ENCODE measurements at regions of chr1 and their contacts with region 1.

Region 1: GRCh38 chr1:24930204-24931145 is at the start of gene RUNX3:
- DNase-seq: peak; percentile 87 to 98 (median 94)
- ATAC-seq: peak; percentile 77
- H3K4me3 ChIP-seq: peak within 1 kb of the TSS; percentile 89 to 97
- H3K4me3 Mint-ChIP-seq: peak within 1 kb of the TSS; percentile 93
- H3K27ac ChIP-seq: peak within 1 kb of the TSS; percentile 95 to 96
- H3K27ac Mint-ChIP-seq: peak within 1 kb of the TSS; percentile 99
- H3K4me1 ChIP-seq: peaks cover 49% of the 10 kb centered on the region
- H3K4me1 Mint-ChIP-seq: peaks cover 50% of the 10 kb centered on the region
- H3K27me3 ChIP-seq: no peaks in the 10 kb centered on the region
- H3K27me3 Mint-ChIP-seq: no peaks in the 10 kb centered on the region
- CTCF ChIP-seq: no peak
- total RNA-seq, gene RUNX3: 423 to 424 TPM

Region 2: GRCh38 chr1:24502709-24503058 is 427.8 kb before region 1 on chr1 and contains the start of gene RCAN3:
- CTCF ChIA-PET with region 1: no interaction called
- POLR2A ChIA-PET with region 1: interaction called, 4 read pairs
- intact Hi-C with region 1: loop called (anchors 10 kb)
- DNase-seq: peak; percentile 78 to 95 (median 88)
- ATAC-seq: peak; percentile 63
- H3K4me3 ChIP-seq: peak within 1 kb of the TSS; percentile 73 to 76
- H3K4me3 Mint-ChIP-seq: peak within 1 kb of the TSS; percentile 99
- H3K27ac ChIP-seq: peak within 1 kb of the TSS; percentile 82 to 95
- H3K27ac Mint-ChIP-seq: peak within 1 kb of the TSS; percentile 99
- H3K4me1 ChIP-seq: peaks cover 47% of the 10 kb centered on the region
- H3K4me1 Mint-ChIP-seq: peaks cover 70% of the 10 kb centered on the region
- H3K27me3 ChIP-seq: no peaks in the 10 kb centered on the region
- H3K27me3 Mint-ChIP-seq: no peaks in the 10 kb centered on the region
- CTCF ChIP-seq: no peak
- total RNA-seq, gene RCAN3: 129 to 130 TPM

Region 3: GRCh38 chr1:24886241-24886640 is 44.2 kb before region 1 on chr1:
- CTCF ChIA-PET with region 1: no interaction called
- POLR2A ChIA-PET with region 1: no interaction called
- intact Hi-C with region 1: no loop called
- DNase-seq: peak in 1 of 9 experiments; percentile 17
- ATAC-seq: no peak
- H3K4me3 ChIP-seq: no peak overlapping the region
- H3K4me3 Mint-ChIP-seq: no peak overlapping the region
- H3K27ac ChIP-seq: no peak overlapping the region
- H3K27ac Mint-ChIP-seq: no peak overlapping the region
- H3K4me1 ChIP-seq: no peaks in the 10 kb centered on the region
- H3K4me1 Mint-ChIP-seq: no peaks in the 10 kb centered on the region
- H3K27me3 ChIP-seq: no peaks in the 10 kb centered on the region
- H3K27me3 Mint-ChIP-seq: no peaks in the 10 kb centered on the region
- CTCF ChIP-seq: no peak

Region 4: GRCh38 chr1:24909388-24909898 is 21.0 kb before region 1 on chr1:
- CTCF ChIA-PET with region 1: interaction called, 100 read pairs
- POLR2A ChIA-PET with region 1: interaction called, 195 read pairs
- intact Hi-C with region 1: loop called (anchors 1 kb)
- DNase-seq: peak in 3 of 9 experiments; percentile 13 to 41 (median 28)
- ATAC-seq: no peak
- H3K4me3 ChIP-seq: no peak overlapping the region
- H3K4me3 Mint-ChIP-seq: peak overlapping the region; percentile 5
- H3K27ac ChIP-seq: peak overlapping the region; percentile 24 to 96
- H3K27ac Mint-ChIP-seq: peak overlapping the region; percentile 100
- H3K4me1 ChIP-seq: peaks cover 87% of the 10 kb centered on the region
- H3K4me1 Mint-ChIP-seq: peaks cover 68% of the 10 kb centered on the region
- H3K27me3 ChIP-seq: no peaks in the 10 kb centered on the region
- H3K27me3 Mint-ChIP-seq: no peaks in the 10 kb centered on the region
- CTCF ChIP-seq: no peak

Region 5: DNA sequence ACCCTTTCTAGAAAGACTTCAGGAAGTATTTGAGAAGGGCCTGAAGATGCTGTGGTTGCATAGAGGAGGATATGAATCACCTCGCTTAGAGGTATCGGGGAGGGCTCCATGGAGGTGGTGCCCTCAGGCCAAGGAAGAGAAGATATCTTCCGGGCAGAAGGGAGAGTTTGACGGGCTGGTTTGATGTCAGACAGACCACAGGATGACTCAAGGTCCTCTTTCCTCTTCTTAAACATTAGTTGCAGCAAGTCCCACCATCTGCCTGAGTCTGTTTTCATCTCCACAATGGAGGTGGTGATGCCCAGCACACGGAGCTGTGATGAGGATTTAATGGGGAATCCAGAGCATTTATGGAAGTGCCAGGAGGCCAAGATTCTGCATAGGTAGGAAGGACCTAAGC is 24.7 kb after region 1 on chr1:
- CTCF ChIA-PET with region 1: interaction called, 111 read pairs
- POLR2A ChIA-PET with region 1: interaction called, 9 read pairs
- intact Hi-C with region 1: no loop called
- DNase-seq: peak in 8 of 9 experiments; percentile 56 to 88 (median 72)
- ATAC-seq: peak; percentile 82
- H3K4me3 ChIP-seq: peak overlapping the region in 1 of 2 experiments; percentile 2
- H3K4me3 Mint-ChIP-seq: peak overlapping the region; percentile 37
- H3K27ac ChIP-seq: peak overlapping the region in 1 of 2 experiments; percentile 23
- H3K27ac Mint-ChIP-seq: peak overlapping the region; percentile 93
- H3K4me1 ChIP-seq: peaks cover 76% of the 10 kb centered on the region
- H3K4me1 Mint-ChIP-seq: peaks cover 83% of the 10 kb centered on the region
- H3K27me3 ChIP-seq: no peaks in the 10 kb centered on the region
- H3K27me3 Mint-ChIP-seq: no peaks in the 10 kb centered on the region
- CTCF ChIP-seq: no peak

Region 6: GRCh38 chr1:24987875-24988557 is 57.5 kb after region 1 on chr1:
- CTCF ChIA-PET with region 1: interaction called, 6 read pairs
- POLR2A ChIA-PET with region 1: no interaction called
- intact Hi-C with region 1: loop called in 1 of 2 experiments (anchors 2 kb)
- DNase-seq: peak in 2 of 9 experiments; percentile 33 to 71
- ATAC-seq: peak; percentile 45
- H3K4me3 ChIP-seq: no peak overlapping the region
- H3K4me3 Mint-ChIP-seq: peak overlapping the region; percentile 53
- H3K27ac ChIP-seq: no peak overlapping the region
- H3K27ac Mint-ChIP-seq: peak overlapping the region; percentile 83
- H3K4me1 ChIP-seq: peaks cover 100% of the 10 kb centered on the region
- H3K4me1 Mint-ChIP-seq: peaks cover 97% of the 10 kb centered on the region
- H3K27me3 ChIP-seq: no peaks in the 10 kb centered on the region
- H3K27me3 Mint-ChIP-seq: no peaks in the 10 kb centered on the region
- CTCF ChIP-seq: no peak

Region 7: DNA sequence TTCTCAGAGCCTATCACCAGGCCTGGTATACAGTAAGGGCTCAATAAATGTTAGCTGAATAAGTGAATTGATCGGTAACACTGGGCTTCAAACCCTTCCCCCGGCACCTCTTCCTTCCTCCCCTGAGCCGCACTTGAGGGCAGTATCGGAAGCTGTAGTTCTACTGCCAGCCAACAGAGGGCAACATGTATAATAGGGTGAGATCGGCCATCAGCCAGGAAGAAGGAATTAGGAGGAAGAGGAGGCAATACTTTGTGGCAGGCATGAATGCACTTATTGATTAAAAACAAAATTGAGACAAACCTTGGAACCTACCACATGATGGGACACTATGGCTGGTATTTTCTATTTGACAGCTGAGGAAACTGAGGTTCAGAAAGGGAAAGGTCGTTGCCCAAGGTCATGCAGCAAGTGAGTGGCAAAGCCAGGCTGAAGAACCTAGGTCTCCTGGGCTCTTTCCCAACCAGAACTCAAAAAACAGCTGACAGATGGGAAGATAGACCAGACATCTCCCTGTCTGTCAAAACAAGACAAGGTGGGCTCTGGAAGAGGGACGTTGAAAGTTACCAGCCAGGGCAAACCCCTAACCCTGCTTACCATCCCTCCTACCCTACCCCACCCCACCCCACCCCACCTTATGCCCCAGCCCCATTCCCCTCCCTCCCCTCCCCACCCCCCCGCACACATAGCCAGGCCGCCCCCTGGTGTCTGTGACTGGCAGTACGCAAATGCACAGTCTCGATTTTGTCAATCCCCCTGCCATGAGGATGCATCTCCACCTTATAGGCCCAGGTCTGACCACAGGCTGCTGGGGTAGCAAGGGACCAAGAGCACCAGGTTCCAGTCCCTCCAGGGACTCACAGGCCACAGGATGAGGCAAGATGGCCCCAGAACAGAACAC is 106.9 kb after region 1 on chr1:
- CTCF ChIA-PET with region 1: interaction called, 67 read pairs
- POLR2A ChIA-PET with region 1: interaction called, 16 read pairs
- intact Hi-C with region 1: loop called (anchors 1 kb)
- DNase-seq: peak in 8 of 9 experiments; percentile 59 to 80 (median 70)
- ATAC-seq: peak; percentile 47
- H3K4me3 ChIP-seq: no peak overlapping the region
- H3K4me3 Mint-ChIP-seq: peak overlapping the region; percentile 5
- H3K27ac ChIP-seq: no peak overlapping the region
- H3K27ac Mint-ChIP-seq: no peak overlapping the region
- H3K4me1 ChIP-seq: peaks cover 65% of the 10 kb centered on the region
- H3K4me1 Mint-ChIP-seq: peaks cover 52% of the 10 kb centered on the region
- H3K27me3 ChIP-seq: no peaks in the 10 kb centered on the region
- H3K27me3 Mint-ChIP-seq: no peaks in the 10 kb centered on the region
- CTCF ChIP-seq: peak; percentile 72

Region 8: GRCh38 chr1:25148673-25149300 is 218.3 kb after region 1 on chr1:
- CTCF ChIA-PET with region 1: interaction called, 5 read pairs
- POLR2A ChIA-PET with region 1: no interaction called
- intact Hi-C with region 1: loop called (anchors 1 kb)
- DNase-seq: peak in 5 of 9 experiments; percentile 29 to 78 (median 34)
- ATAC-seq: peak; percentile 73
- H3K4me3 ChIP-seq: no peak overlapping the region
- H3K4me3 Mint-ChIP-seq: no peak overlapping the region
- H3K27ac ChIP-seq: no peak overlapping the region
- H3K27ac Mint-ChIP-seq: no peak overlapping the region
- H3K4me1 ChIP-seq: no peaks in the 10 kb centered on the region
- H3K4me1 Mint-ChIP-seq: peaks cover 4% of the 10 kb centered on the region
- H3K27me3 ChIP-seq: no peaks in the 10 kb centered on the region
- H3K27me3 Mint-ChIP-seq: peaks cover 13% of the 10 kb centered on the region
- CTCF ChIP-seq: peak; percentile 69